ENCODE measurements at regions of chr19 and their contacts with region 1.

Region 1: GRCh38 chr19:46860125-46860845 is 512 bp upstream of the ARHGAP35 start:
- DNase-seq: peak; percentile 97
- H3K4me3 Mint-ChIP-seq: peak overlapping the region; percentile 84
- H3K27ac Mint-ChIP-seq: peak overlapping the region; percentile 87
- H3K4me1 Mint-ChIP-seq: peaks cover 21% of the 10 kb centered on the region
- H3K27me3 Mint-ChIP-seq: no peaks in the 10 kb centered on the region

Region 2: DNA sequence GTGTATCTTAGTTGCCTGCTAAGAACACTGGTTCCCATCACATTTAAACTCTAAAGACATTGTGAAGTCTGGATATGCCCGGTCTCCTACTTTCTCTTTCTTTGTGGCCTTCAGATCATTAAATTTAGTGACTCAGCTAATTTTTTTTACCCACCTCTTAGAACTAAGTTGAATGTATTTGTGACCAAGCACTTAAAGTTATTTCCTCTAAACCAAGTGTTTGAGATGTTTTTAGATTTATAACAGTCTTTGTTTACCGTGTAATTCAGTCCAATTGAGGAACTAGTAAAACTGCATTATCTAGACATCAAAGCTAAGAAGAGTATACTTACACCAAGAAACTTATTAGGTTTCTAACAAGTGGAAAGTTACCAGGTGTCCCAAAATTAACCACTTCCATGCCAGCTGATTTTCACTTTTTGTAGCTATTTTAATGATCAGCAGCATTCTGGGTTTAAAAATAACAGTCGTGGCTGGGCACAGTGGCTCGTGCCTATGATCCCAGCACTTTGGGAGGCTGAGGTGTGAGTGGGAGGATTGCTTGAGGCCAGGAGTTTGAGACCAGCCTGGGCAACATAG is 53.7 kb after region 1 on chr19:
- CTCF ChIA-PET with region 1: no interaction called
- intact Hi-C with region 1: loop called (anchors 10 kb)
- DNase-seq: no peak
- H3K4me3 Mint-ChIP-seq: no peak overlapping the region
- H3K27ac Mint-ChIP-seq: no peak overlapping the region
- H3K4me1 Mint-ChIP-seq: peaks cover 63% of the 10 kb centered on the region
- H3K27me3 Mint-ChIP-seq: no peaks in the 10 kb centered on the region

Region 3: GRCh38 chr19:46970815-46971214 is 110.5 kb after region 1 on chr19:
- CTCF ChIA-PET with region 1: no interaction called
- intact Hi-C with region 1: no loop called
- DNase-seq: no peak
- H3K4me3 Mint-ChIP-seq: no peak overlapping the region
- H3K27ac Mint-ChIP-seq: no peak overlapping the region
- H3K4me1 Mint-ChIP-seq: peaks cover 16% of the 10 kb centered on the region
- H3K27me3 Mint-ChIP-seq: no peaks in the 10 kb centered on the region

Region 4: DNA sequence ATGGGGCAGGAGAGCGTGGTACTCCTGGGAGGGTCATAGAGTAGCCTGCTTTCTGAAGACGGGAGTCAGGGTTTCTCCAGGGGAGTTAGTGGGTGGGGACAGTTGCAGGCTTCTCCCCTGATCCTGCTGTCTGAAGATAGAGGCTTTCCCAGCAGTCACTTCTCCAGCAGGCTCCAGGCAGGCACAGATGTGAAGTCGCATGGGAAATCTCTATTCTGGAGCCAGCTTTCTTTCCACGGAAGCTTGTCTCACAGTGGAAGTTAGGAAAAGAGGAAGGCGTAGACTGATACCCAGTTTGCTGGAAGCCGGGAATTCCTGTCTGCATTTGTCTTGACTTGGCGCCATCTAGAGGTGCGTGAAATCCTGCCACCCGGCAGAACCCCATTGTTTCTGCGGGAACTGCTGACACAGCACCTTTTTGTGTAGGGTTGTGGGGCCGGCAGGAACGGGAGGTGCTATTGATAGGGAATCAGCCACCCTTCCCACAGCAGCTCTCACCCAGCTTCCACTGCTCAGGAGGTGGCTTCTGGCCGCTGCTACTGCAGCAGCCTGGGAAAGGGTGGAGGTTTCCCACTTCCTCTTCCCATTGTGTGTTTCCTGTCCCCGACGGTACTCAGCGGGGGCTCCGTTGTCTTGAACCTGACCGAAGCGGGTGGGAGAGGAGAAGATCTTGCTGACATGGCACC is 130.8 kb after region 1 on chr19:
- CTCF ChIA-PET with region 1: interaction called, 35 read pairs
- intact Hi-C with region 1: loop called (anchors 1 kb)
- DNase-seq: peak; percentile 78
- H3K4me3 Mint-ChIP-seq: no peak overlapping the region
- H3K27ac Mint-ChIP-seq: no peak overlapping the region
- H3K4me1 Mint-ChIP-seq: peaks cover 4% of the 10 kb centered on the region
- H3K27me3 Mint-ChIP-seq: no peaks in the 10 kb centered on the region

Measured in activated naive CD4-positive, alpha-beta T cell treated with anti-CD3 and anti-CD28 coated beads for 36 hours (primary cell).